Gastrocnemius medialis (tissue), 4 donors: ENCODE measurements at regions of chr6 and their contacts with region 1.

Region 1: GRCh38 chr6:25726122-25726911 is 28.2 kb upstream of the SLC17A4 start:
- DNase-seq: no peak
- ATAC-seq: no peak
- H3K4me3 ChIP-seq: no peak overlapping the region
- H3K27ac ChIP-seq: no peak overlapping the region
- H3K4me1 ChIP-seq: no peaks in the 10 kb centered on the region
- H3K27me3 ChIP-seq: no peaks in the 10 kb centered on the region
- CTCF ChIP-seq: no peak
- POLR2A ChIP-seq: no peak

Region 2: DNA sequence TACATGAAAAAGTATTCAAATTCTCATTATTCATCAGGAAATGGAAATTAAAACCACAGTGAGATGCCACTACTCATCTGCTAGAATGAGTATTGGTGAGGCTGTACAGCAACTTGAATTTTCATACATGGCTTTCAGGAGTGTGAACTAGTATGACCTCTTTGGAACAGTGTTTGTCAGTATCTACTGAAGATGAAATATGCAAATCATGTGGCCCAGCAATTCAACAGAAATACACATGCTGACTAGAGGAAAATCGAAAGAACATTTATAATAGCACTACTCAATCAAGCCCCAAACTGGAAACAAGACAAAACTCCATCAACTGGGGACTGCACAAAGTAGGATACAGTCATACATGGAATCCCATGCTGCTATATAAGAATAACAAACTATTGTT is 1470.6 kb before region 1 on chr6:
- in situ Hi-C with region 1: no loop called
- intact Hi-C with region 1: no loop called
- DNase-seq: no peak
- ATAC-seq: no peak
- H3K4me3 ChIP-seq: no peak overlapping the region
- H3K27ac ChIP-seq: no peak overlapping the region
- H3K4me1 ChIP-seq: no peaks in the 10 kb centered on the region
- H3K27me3 ChIP-seq: no peaks in the 10 kb centered on the region
- CTCF ChIP-seq: no peak
- POLR2A ChIP-seq: no peak

Region 3: DNA sequence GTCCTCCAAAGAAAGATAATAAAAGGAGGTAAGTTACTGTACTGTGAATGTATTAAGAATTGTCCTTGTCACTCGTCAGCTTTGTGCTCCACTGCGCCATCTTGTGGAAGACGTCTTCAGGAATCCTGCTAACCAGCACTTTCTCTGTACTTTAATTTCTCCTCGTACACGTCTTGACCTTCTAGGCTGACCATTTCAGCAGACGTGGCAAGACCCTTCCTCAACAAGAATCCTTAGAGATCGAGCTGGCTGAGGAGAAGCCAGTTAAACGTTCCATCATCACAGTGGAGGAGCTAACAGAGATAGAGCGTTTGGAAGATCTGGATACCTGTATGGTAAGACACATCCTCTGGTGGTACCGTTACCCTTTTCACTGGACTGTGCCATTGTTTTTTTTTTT is 169.8 kb before region 1 on chr6:
- in situ Hi-C with region 1: no loop called
- intact Hi-C with region 1: no loop called
- DNase-seq: peak; percentile 11 to 39
- ATAC-seq: no peak
- H3K4me3 ChIP-seq: no peak overlapping the region
- H3K27ac ChIP-seq: no peak overlapping the region
- H3K4me1 ChIP-seq: no peaks in the 10 kb centered on the region
- H3K27me3 ChIP-seq: no peaks in the 10 kb centered on the region
- CTCF ChIP-seq: peak in 3 of 5 experiments; percentile 38 to 62 (median 58)
- POLR2A ChIP-seq: no peak

Region 4: DNA sequence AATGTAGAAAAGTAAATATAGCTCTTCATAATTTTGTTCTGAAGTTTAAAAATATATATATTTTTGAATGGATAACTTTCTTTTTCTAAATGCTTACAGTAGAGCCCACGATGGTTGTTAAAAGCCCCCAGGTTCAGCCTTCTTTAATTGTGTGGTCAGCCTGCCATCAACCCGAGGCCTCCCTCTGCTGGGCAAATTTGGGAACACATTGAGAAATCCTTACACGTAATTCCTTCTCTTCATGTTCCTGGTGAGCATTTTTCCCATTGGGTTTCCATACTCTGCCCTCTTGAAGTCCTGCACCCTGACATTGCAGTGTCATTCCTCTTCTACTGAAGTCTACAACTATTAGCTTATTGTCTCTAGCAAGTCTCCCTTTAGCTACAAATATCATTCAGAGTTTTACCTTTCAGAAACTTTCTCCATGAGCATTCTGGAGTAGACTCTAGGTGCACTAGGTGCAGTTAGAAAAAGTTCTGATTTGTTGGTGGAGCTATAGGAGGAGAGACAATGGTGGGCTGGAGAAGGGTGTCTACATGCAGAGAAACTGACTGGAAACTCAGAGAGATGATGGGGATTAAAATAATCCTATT is 276.9 kb after region 1 on chr6:
- in situ Hi-C with region 1: loop called in 1 of 4 experiments (anchors 10 kb)
- intact Hi-C with region 1: loop called (anchors 10 kb)
- DNase-seq: peak in 1 of 2 donors; percentile 25
- ATAC-seq: peak in 1 of 2 donors; percentile 82
- H3K4me3 ChIP-seq: no peak overlapping the region
- H3K27ac ChIP-seq: no peak overlapping the region
- H3K4me1 ChIP-seq: no peaks in the 10 kb centered on the region
- H3K27me3 ChIP-seq: no peaks in the 10 kb centered on the region
- CTCF ChIP-seq: peak; percentile 30 to 81 (median 54)
- POLR2A ChIP-seq: no peak